AG04449 (cell line): ENCODE measurements at regions of chr4 and their contacts with region 1.

Region 1: DNA sequence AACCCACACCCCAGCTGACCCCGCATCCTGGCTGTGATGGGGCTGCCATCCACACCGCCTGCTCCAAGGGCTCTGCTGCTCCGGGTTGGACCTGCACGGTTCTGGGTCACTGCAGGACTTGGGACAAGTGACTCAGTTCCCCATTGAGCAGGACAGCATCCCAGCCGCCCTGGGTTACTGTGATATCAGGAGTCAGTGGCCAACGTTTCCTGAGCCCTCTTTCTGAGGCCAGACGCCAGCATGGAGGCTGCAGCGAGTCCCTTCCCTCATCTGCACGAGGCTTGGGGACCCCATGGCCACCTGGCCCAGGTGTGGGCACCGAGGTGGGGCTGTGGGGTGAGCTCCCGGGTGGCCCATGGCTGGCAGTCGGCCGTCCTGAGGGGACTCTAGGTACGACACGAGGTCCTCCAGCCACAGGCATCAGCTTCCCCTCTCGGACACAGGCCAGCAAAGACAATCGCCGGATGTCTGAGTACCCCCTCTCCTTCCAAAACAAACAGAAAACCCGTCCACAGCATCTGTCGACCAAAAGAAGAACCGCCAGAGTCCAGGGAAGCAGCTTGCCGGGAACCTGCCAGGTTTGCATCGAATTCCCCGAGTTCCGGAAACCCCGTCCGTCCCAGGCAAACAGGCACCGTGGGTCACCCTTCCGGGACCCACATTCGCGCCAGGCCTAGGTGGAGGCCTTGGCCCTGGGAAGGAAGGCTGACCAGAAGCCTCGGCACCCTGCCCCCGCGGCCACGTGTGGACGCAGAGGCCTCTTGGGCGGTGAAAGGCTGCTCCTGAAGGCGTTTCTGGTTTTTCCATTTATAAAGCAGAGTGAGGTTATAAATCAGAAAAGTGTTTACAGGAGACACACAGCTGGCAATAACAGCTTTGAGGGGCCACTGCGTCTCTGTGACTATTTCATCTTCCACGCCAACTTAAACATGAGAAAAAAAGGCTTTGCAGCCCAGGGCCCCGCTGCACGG is 136.0 kb downstream of the FAM53A start:
- DNase-seq: no peak
- H3K4me3 ChIP-seq: no peak overlapping the region
- CTCF ChIP-seq: no peak

Region 2: GRCh38 chr4:1533401-1534064 is 14.6 kb before region 1 on chr4:
- CTCF ChIA-PET with region 1: interaction called, 12 read pairs
- POLR2A ChIA-PET with region 1: no interaction called
- DNase-seq: no peak
- H3K4me3 ChIP-seq: no peak overlapping the region
- CTCF ChIP-seq: no peak

Region 3: DNA sequence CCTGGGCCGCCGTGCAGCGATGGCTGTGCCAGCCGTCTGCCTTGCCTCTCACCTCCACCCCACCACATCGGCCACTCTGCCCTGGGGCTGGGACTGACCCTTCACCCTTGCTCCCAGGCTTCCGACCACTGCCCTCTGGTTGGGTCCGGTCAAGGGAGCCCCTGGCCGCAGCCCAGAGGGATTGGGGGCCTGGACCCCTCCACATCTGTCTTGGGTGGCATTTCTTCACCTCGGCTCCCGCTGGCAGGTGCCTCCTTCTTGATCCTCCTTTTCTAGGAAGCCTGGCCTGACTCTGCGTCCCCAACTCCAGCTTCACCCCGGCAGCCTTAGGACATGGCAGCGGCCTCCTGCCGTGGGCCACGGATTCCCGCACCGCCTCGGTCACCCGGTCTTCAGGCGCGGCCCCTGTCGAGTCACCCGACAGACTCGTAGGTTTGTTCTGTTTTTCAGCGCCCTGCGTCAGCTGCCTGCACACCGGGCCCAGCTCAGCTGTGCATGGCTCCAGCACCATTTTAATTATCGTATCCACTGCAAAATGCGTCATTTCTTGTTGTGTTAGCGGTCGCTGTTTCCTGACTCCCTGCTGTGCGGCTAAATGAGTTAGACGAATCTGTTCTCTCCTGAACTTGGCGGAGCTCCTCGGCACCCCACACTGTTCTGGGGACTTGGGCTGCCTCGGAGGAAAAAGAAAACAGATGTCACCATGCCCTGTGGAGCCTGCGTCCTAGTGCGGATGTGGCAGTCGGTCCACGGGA is 11.9 kb after region 1 on chr4:
- CTCF ChIA-PET with region 1: interaction called, 31 read pairs
- POLR2A ChIA-PET with region 1: no interaction called
- DNase-seq: no peak
- H3K4me3 ChIP-seq: no peak overlapping the region
- CTCF ChIP-seq: no peak

Region 4: GRCh38 chr4:1640190-1640589 is 92.0 kb after region 1 on chr4:
- CTCF ChIA-PET with region 1: no interaction called
- POLR2A ChIA-PET with region 1: no interaction called
- DNase-seq: no peak
- H3K4me3 ChIP-seq: no peak overlapping the region
- CTCF ChIP-seq: no peak